MCF 10A (cell line): ENCODE measurements at regions of chr10 and their contacts with region 1.

Region 1: GRCh38 chr10:102072673-102073527 is 7.8 kb downstream of the HPS6 start:
- DNase-seq: peak; percentile 86
- H3K4me3 Mint-ChIP-seq: no peak overlapping the region
- H3K27ac Mint-ChIP-seq: peak overlapping the region; percentile 76
- H3K4me1 Mint-ChIP-seq: peaks cover 12% of the 10 kb centered on the region
- H3K27me3 Mint-ChIP-seq: no peaks in the 10 kb centered on the region
- CTCF ChIP-seq: peak; percentile 84

Region 2: GRCh38 chr10:101782811-101783735 is 289.8 kb before region 1 on chr10 and contains the start of gene NPM3:
- CTCF ChIA-PET with region 1: interaction called, 4 read pairs
- POLR2A ChIA-PET with region 1: no interaction called
- intact Hi-C with region 1: loop called (anchors 2 kb)
- DNase-seq: peak; percentile 83
- H3K4me3 Mint-ChIP-seq: peak within 1 kb of the TSS; percentile 100
- H3K27ac Mint-ChIP-seq: peak within 1 kb of the TSS; percentile 98
- H3K4me1 Mint-ChIP-seq: peaks cover 28% of the 10 kb centered on the region
- H3K27me3 Mint-ChIP-seq: no peaks in the 10 kb centered on the region
- CTCF ChIP-seq: no peak
- total RNA-seq, gene NPM3: 120 and 163 TPM in 2 replicates

Region 3: GRCh38 chr10:101889256-101890210 is 183.4 kb before region 1 on chr10:
- CTCF ChIA-PET with region 1: interaction called, 5 read pairs
- POLR2A ChIA-PET with region 1: no interaction called
- intact Hi-C with region 1: loop called (anchors 1 kb)
- DNase-seq: peak; percentile 81
- H3K4me3 Mint-ChIP-seq: no peak overlapping the region
- H3K27ac Mint-ChIP-seq: peak overlapping the region; percentile 69
- H3K4me1 Mint-ChIP-seq: peaks cover 5% of the 10 kb centered on the region
- H3K27me3 Mint-ChIP-seq: no peaks in the 10 kb centered on the region
- CTCF ChIP-seq: peak; percentile 78

Region 4: DNA sequence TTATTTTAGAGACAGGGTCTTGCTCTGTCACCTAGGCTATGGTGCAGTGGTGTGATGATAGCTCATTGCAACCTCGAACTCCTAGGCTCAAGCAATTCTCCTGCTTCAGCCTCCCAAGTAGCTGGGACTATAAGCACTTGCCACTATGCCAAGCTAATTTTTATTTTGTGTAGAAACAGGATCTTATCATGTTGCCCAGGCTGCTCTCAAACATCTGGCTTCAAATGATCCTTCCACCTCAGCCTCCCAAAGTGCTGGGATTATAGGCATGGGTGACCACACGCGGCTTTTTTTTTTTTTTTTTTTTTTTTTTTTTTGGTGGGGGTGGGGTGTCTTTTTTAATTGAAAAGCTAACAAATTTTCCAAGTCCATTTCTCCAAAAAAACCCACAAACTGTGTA is 10.6 kb after region 1 on chr10:
- CTCF ChIA-PET with region 1: interaction called, 36 read pairs
- POLR2A ChIA-PET with region 1: interaction called, 3 read pairs
- intact Hi-C with region 1: no loop called
- DNase-seq: no peak
- H3K4me3 Mint-ChIP-seq: no peak overlapping the region
- H3K27ac Mint-ChIP-seq: no peak overlapping the region
- H3K4me1 Mint-ChIP-seq: no peaks in the 10 kb centered on the region
- H3K27me3 Mint-ChIP-seq: peaks cover 11% of the 10 kb centered on the region
- CTCF ChIP-seq: no peak

Region 5: DNA sequence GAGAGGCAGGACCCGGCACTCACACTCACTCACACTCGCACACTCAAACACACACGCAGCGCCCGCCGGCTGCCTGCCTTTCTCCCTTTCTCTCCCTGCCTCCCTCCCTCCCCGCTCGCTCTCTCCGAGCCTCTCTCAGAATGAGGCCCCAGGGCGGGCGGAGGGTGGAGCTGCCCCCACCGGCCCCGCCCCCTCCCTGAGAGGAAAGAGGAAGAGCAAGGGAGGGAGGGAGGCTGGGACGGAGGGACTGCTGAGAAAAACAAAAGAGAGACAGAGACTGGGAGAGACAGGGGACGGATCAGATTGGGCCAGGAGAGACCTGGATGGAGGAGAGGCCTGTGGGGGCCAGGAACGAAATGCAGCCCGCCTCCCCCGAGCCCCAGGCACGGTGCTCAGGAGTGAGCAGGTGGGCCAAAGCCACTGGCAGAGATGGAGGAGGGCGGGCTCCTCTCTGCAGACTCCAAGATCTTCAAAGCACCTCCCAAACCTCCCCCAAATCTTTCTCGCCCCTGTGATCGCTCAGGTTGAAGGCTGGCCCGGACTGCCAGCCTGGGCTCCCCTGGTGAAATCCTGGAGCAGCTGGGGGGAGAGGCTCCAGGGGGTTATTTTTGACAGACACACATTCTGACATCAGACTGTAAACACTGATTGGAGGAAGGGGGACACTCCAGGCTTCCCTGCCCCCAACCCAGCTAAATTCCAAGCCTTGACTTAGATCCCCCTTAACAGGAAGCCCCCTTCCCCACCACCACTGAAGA is 42.1 kb after region 1 on chr10:
- CTCF ChIA-PET with region 1: interaction called, 11 read pairs
- POLR2A ChIA-PET with region 1: interaction called, 3 read pairs
- intact Hi-C with region 1: no loop called
- DNase-seq: peak; percentile 93
- H3K4me3 Mint-ChIP-seq: peak overlapping the region; percentile 92
- H3K27ac Mint-ChIP-seq: peak overlapping the region; percentile 92
- H3K4me1 Mint-ChIP-seq: peaks cover 59% of the 10 kb centered on the region
- H3K27me3 Mint-ChIP-seq: no peaks in the 10 kb centered on the region
- CTCF ChIP-seq: no peak